Mammary epithelial cell (primary cell): ENCODE measurements at regions of chr1 and their contacts with region 1.

Region 1: GRCh38 chr1:156445789-156446263 is 54.7 kb downstream of the MEF2D start:
- DNase-seq: peak; percentile 73
- H3K4me3 ChIP-seq: no peak overlapping the region
- H3K27ac ChIP-seq: no peak overlapping the region
- H3K4me1 ChIP-seq: peaks cover 4% of the 10 kb centered on the region
- H3K27me3 ChIP-seq: no peaks in the 10 kb centered on the region
- CTCF ChIP-seq: peak; percentile 98 to 99

Region 2: GRCh38 chr1:154936555-154937084 is 1509.2 kb before region 1 on chr1 and contains the start of gene PMVK:
- CTCF ChIA-PET with region 1: no interaction called
- dilution Hi-C with region 1: no loop called
- in situ Hi-C with region 1: no loop called
- intact Hi-C with region 1: no loop called
- DNase-seq: peak; percentile 95
- H3K4me3 ChIP-seq: peak within 1 kb of the TSS; percentile 57 to 81 (median 71)
- H3K27ac ChIP-seq: peak within 1 kb of the TSS; percentile 96
- H3K4me1 ChIP-seq: peaks cover 38% of the 10 kb centered on the region
- H3K27me3 ChIP-seq: no peaks in the 10 kb centered on the region
- CTCF ChIP-seq: peak in 1 of 2 donors; percentile 50
- total RNA-seq, gene PMVK: 7.2 to 34.7 TPM

Region 3: GRCh38 chr1:156146020-156146768 is 299.6 kb before region 1 on chr1:
- CTCF ChIA-PET with region 1: no interaction called
- dilution Hi-C with region 1: no loop called
- in situ Hi-C with region 1: no loop called
- intact Hi-C with region 1: loop called (anchors 10 kb)
- DNase-seq: peak; percentile 93
- H3K4me3 ChIP-seq: no peak overlapping the region
- H3K27ac ChIP-seq: no peak overlapping the region
- H3K4me1 ChIP-seq: peaks cover 10% of the 10 kb centered on the region
- H3K27me3 ChIP-seq: no peaks in the 10 kb centered on the region
- CTCF ChIP-seq: peak; percentile 67 to 74

Region 4: GRCh38 chr1:156160743-156161171 is 285.1 kb before region 1 on chr1:
- CTCF ChIA-PET with region 1: no interaction called
- dilution Hi-C with region 1: loop called (anchors 10 kb)
- in situ Hi-C with region 1: no loop called
- intact Hi-C with region 1: no loop called
- DNase-seq: no peak
- H3K4me3 ChIP-seq: no peak overlapping the region
- H3K27ac ChIP-seq: no peak overlapping the region
- H3K4me1 ChIP-seq: no peaks in the 10 kb centered on the region
- H3K27me3 ChIP-seq: no peaks in the 10 kb centered on the region
- CTCF ChIP-seq: no peak

Region 5: DNA sequence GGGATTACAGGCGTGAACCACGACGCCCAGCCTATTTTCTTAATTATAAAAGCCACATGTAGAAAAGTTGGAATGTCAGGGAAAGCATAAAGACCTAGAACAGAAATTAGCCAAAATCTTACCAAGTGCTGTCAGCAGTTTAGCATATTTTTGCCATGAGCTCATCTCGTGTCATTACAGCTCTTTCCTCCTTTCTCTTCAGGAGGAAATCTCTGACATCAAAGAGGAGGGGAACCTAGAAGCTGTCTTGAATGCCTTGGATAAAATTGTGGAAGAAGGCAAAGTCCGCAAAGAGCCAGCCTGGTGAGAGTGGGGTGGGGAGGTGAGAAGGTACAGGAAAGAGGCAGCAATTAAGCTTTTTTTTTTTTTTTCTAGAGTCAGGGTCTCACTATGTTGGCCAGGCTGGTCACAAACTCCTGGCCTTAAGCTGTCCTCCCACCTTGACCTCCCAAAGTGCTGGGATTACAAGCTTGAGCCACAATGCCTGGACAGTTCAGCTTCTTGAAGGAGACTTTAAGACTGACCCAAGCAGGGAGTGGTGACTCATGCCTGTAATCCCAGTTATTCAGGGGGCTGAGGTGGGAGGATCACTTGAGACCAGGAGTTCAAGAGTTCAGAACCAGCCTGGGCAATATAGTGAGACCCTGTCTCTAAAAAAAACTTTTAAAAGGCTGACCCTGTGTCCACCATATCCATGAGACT is 212.2 kb before region 1 on chr1:
- CTCF ChIA-PET with region 1: interaction called, 13 read pairs
- dilution Hi-C with region 1: no loop called
- in situ Hi-C with region 1: no loop called
- intact Hi-C with region 1: no loop called
- DNase-seq: no peak
- H3K4me3 ChIP-seq: no peak overlapping the region
- H3K27ac ChIP-seq: no peak overlapping the region
- H3K4me1 ChIP-seq: peaks cover 8% of the 10 kb centered on the region
- H3K27me3 ChIP-seq: no peaks in the 10 kb centered on the region
- CTCF ChIP-seq: no peak

Region 6: GRCh38 chr1:156356875-156357534 is 88.8 kb before region 1 on chr1:
- CTCF ChIA-PET with region 1: interaction called, 4 read pairs
- dilution Hi-C with region 1: no loop called
- in situ Hi-C with region 1: no loop called
- intact Hi-C with region 1: loop called (anchors 1 kb)
- DNase-seq: peak; percentile 61
- H3K4me3 ChIP-seq: no peak overlapping the region
- H3K27ac ChIP-seq: no peak overlapping the region
- H3K4me1 ChIP-seq: peaks cover 6% of the 10 kb centered on the region
- H3K27me3 ChIP-seq: no peaks in the 10 kb centered on the region
- CTCF ChIP-seq: peak; percentile 87 to 96

Region 7: GRCh38 chr1:156421062-156421938 is 24.5 kb before region 1 on chr1:
- CTCF ChIA-PET with region 1: interaction called, 14 read pairs
- dilution Hi-C with region 1: no loop called
- in situ Hi-C with region 1: no loop called
- intact Hi-C with region 1: loop called (anchors 2 kb)
- DNase-seq: peak; percentile 70
- H3K4me3 ChIP-seq: peak overlapping the region in 2 of 3 experiments; percentile 39
- H3K27ac ChIP-seq: no peak overlapping the region
- H3K4me1 ChIP-seq: peaks cover 11% of the 10 kb centered on the region
- H3K27me3 ChIP-seq: peaks cover 21% of the 10 kb centered on the region
- CTCF ChIP-seq: no peak

Region 8: GRCh38 chr1:156510709-156511108 is 64.9 kb after region 1 on chr1:
- CTCF ChIA-PET with region 1: no interaction called
- dilution Hi-C with region 1: no loop called
- in situ Hi-C with region 1: no loop called
- intact Hi-C with region 1: no loop called
- DNase-seq: no peak
- H3K4me3 ChIP-seq: no peak overlapping the region
- H3K27ac ChIP-seq: no peak overlapping the region
- H3K4me1 ChIP-seq: peaks cover 3% of the 10 kb centered on the region
- H3K27me3 ChIP-seq: no peaks in the 10 kb centered on the region
- CTCF ChIP-seq: no peak